ENCODE measurements at regions of chrX and their contacts with region 1.

Region 1: DNA sequence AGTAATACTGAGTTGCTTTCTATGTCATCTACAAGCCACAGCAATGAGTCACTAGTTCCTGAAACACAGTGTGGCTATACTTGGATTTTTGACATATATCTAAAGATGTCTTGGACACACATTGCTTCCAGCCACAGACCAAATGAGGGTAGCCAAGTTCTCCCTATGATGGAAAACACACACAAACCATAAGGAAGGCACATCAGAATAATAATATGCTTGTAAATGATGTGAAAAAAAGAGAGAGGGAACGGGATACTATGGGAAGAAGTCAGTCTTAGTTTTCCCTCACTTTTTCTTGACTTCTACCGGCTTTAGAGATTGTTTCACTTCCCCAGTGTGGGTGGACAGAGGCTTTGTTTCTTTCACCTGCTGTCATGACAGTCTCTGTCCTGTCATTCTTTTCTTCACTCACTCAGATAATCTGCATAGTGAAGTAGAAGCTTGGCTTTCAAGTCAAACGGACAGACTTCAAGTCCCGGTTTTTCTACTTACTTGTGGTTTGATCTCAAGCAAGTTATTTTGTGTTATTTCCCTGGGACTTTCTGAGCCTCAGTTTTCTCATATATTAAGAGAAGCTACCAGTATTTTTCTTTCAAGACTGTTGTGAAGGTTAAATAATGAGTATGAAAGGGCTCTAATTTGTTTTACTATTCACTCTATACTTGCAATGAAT is 34.7 kb downstream of the P2RY10 start:
- DNase-seq: peak; percentile 17
- H3K4me3 Mint-ChIP-seq: peak overlapping the region; percentile 55
- H3K27ac Mint-ChIP-seq: peak overlapping the region; percentile 95
- H3K4me1 Mint-ChIP-seq: peaks cover 21% of the 10 kb centered on the region
- H3K27me3 Mint-ChIP-seq: no peaks in the 10 kb centered on the region

Region 2: DNA sequence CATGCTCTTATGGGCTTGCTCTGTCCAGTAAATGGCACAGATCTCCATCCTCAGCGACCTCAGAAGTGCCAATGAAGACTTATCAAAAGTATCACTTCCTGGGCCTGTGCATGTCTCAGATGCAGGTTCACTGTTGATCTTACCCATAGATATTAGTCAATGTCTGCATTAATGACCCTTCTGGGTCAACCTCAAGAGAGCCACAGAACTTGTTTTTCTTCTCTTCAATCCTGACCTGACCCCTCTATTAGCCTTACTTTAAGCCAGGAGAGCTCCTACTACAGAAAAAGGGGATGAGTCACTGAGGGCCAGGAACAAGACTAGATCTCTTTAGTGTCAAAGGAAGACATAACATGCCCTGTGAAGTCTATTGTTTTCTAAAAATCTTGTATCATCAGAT is 78.5 kb before region 1 on chrX:
- CTCF ChIA-PET with region 1: no interaction called
- intact Hi-C with region 1: no loop called
- DNase-seq: no peak
- H3K4me3 Mint-ChIP-seq: no peak overlapping the region
- H3K27ac Mint-ChIP-seq: no peak overlapping the region
- H3K4me1 Mint-ChIP-seq: no peaks in the 10 kb centered on the region
- H3K27me3 Mint-ChIP-seq: no peaks in the 10 kb centered on the region

Region 3: DNA sequence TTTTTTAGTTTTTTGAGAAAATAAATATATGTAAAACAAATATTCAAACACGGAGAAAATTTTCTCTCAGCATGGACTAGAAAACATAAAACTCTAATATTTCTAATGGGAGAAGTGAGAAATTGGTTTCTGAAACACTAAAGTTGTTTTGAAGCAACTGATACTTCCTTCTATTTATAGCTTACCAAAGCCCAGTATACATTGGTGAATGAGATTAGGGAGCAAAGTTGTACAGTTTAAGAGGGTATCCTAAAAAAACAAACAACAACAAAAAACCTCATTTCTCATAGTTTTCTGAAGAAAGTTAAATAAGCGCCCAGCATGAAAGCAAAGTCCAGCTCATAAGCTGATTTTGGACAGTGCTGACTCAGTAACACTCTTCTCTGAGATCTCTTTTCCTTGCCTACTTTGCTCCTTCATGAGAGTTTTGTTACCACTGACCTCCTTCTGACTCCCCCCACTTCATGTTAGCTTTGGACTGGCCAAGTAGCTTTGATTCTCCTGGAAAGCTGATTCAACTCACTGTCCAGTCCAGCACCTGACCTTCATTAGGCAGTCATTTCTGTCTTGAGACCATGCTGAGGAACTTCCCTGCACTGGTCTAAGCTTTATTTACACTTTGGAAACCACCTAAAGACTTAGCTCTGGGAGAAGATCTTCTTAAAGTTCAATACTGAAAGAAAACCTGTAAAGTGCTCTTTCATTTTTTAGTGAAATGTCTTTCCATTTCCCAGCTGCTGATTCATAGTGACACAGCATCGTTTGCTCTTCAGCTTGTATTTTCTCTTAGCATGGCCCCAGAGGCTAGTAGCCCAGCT is 56.5 kb before region 1 on chrX:
- CTCF ChIA-PET with region 1: no interaction called
- intact Hi-C with region 1: loop called (anchors 1 kb)
- DNase-seq: peak; percentile 42
- H3K4me3 Mint-ChIP-seq: no peak overlapping the region
- H3K27ac Mint-ChIP-seq: peak overlapping the region; percentile 83
- H3K4me1 Mint-ChIP-seq: peaks cover 14% of the 10 kb centered on the region
- H3K27me3 Mint-ChIP-seq: no peaks in the 10 kb centered on the region

Region 4: DNA sequence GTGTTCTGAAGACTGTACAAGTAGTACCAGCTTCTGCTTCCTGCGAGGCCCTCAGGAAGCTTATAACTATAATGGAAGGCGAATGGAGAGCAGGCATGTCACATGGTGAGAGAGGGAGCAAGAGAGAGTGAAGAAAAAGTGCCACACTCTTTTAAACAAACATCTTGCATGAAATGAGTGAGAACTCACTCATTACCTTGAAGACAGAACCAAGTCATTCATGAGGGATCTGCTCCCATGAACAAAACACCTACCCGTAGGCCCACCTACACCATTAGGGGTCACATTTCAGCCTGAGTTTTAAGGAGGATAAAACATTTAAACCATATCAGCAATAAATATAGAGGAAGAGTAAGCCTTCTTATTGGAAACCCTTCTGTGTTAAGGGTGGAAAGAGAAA is 15.3 kb before region 1 on chrX:
- CTCF ChIA-PET with region 1: no interaction called
- intact Hi-C with region 1: loop called (anchors 2 kb)
- DNase-seq: no peak
- H3K4me3 Mint-ChIP-seq: no peak overlapping the region
- H3K27ac Mint-ChIP-seq: peak overlapping the region; percentile 8
- H3K4me1 Mint-ChIP-seq: peaks cover 26% of the 10 kb centered on the region
- H3K27me3 Mint-ChIP-seq: no peaks in the 10 kb centered on the region

Region 5: DNA sequence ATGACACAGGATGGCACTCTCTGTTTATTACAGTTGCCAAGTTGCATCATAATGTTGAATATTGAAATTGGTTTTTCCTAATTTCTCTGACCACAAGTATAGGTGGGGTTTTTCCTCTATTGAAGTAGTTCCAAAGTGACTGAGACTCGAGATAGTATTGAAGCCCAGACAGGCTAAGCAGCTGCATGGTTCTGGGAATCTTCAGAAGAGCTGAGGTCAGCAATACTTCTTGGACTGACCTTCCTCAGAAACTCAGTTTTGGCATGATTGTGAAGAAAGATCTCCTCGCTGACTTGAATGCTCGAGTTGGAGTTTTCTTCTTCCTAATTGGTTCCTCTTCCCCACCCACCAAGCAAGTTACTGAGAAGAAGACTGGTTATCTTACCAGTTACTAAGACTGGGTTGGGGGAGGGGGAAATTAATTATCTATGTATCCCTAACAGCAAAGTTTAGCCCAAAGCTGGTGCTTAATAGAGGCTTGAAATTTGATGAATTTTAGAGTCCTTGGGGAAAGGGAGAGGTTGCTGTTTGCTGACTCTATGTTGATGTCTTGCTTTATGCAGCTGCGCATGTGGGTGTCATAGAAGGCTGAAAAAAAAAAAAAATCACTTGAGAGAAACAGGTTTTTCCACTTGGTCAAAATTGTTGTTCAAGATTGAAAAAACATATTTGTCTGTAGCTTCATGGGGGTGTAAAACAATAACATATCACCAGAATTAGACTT is 56.4 kb after region 1 on chrX:
- CTCF ChIA-PET with region 1: no interaction called
- intact Hi-C with region 1: loop called (anchors 5 kb)
- DNase-seq: no peak
- H3K4me3 Mint-ChIP-seq: peak overlapping the region; percentile 36
- H3K27ac Mint-ChIP-seq: no peak overlapping the region
- H3K4me1 Mint-ChIP-seq: peaks cover 42% of the 10 kb centered on the region
- H3K27me3 Mint-ChIP-seq: no peaks in the 10 kb centered on the region